ENCODE measurements at regions of chr16 and their contacts with region 1.

Region 1: DNA sequence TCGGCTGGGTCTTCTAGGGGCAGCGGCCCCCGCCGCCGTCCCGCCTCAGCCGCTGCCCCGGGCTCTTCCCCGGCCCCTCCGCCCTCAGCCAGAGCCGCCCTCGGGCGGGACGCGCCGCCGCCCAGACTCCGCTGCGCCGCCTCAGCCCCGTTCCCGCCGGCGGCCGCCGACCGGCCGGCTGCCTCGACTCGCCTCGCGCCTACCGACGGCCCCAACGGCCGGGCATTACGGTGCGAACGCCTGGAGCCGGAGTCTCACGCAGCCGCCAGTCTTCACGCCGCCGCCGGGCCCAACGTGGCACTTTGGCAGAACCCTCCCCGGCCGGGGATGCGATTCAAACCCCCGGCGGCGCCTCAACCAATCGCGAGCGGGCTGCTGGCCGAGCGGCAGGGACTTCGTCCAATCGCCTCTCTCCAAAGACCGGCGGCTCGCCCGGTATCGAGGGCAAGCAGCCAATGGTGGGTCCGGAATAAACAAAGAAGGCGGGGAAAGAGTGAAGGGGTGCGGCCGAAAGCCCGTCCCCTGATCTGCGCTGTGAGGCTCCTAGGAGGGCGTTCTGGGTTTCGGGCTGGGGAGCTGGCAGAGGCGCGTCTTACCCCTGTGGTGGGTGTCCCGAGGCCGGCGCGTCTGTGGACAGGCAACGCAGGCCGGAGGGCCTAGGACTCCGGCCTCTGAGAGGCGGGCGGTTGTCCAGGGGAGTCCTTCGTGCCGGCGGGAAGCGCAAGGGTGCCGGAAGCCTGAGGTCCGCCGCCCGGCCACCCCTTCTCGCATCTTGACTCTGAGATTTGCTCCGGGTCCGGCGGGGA is at the start of gene CDR2:
- DNase-seq: peak; percentile 98 to 99 (median 98)
- H3K4me3 ChIP-seq: peak within 1 kb of the TSS; percentile 86 to 87
- H3K4me3 Mint-ChIP-seq: peak within 1 kb of the TSS; percentile 94 to 99 (median 98)
- H3K27ac ChIP-seq: peak within 1 kb of the TSS; percentile 78
- H3K27ac Mint-ChIP-seq: peak within 1 kb of the TSS; percentile 91 to 97 (median 94)
- H3K4me1 ChIP-seq: peaks cover 41% of the 10 kb centered on the region
- H3K4me1 Mint-ChIP-seq: peaks cover 25 to 56% (median 39%) of the 10 kb centered on the region in 4 donors
- H3K27me3 ChIP-seq: no peaks in the 10 kb centered on the region
- H3K27me3 Mint-ChIP-seq: no peaks in the 10 kb centered on the region
- total RNA-seq, gene CDR2: 94.2 to 99.3 TPM

Region 2: DNA sequence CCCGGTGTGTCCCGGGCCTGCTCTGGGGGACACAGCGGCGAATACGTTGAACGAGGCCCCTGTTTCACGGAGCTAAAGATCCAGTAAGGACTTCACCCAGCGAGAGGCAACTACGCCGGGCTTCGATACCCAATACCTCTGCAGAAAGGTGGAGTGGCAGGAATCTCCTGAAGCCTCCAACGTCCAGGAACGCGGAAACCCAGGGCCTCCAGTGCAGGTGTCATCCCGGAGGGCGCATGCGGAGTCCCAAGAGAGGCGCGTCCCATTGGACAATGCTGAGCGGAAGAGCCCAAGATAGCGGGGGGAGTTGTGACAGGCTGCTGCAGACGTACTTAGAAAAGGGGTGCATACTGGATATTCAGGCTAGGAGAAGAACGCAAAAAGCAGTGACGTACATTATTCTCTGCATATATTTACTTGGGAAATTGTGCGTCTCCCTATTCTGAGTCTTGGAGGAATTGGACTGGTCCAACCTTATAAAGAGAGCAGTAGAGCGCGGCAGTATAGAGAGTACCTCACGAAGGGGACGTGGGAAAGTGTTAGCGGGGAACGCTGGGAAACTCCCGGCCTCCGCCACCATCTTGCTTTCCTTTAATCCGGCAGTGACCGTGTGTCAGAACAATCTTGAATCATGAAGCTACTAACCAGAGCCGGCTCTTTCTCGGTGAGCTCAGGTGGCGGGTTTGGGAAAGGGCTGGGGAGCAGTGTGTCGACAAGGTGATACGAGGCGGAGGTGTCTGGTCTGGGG is 421.5 kb before region 1 on chr16 and contains the start of gene UQCRC2:
- CTCF ChIA-PET with region 1: no interaction called
- POLR2A ChIA-PET with region 1: interaction called, 3 read pairs
- intact Hi-C with region 1: loop called (anchors 5 kb)
- DNase-seq: peak; percentile 90 to 94 (median 92)
- H3K4me3 ChIP-seq: peak within 1 kb of the TSS; percentile 98
- H3K4me3 Mint-ChIP-seq: peak within 1 kb of the TSS; percentile 96 to 100 (median 98)
- H3K27ac ChIP-seq: peak within 1 kb of the TSS; percentile 98
- H3K27ac Mint-ChIP-seq: peak within 1 kb of the TSS; percentile 95 to 100 (median 99)
- H3K4me1 ChIP-seq: peaks cover 53% of the 10 kb centered on the region
- H3K4me1 Mint-ChIP-seq: peaks cover 36 to 82% (median 59%) of the 10 kb centered on the region in 4 donors
- H3K27me3 ChIP-seq: no peaks in the 10 kb centered on the region
- H3K27me3 Mint-ChIP-seq: no peaks in the 10 kb centered on the region
- total RNA-seq, gene UQCRC2: 170 to 177 TPM

Region 3: DNA sequence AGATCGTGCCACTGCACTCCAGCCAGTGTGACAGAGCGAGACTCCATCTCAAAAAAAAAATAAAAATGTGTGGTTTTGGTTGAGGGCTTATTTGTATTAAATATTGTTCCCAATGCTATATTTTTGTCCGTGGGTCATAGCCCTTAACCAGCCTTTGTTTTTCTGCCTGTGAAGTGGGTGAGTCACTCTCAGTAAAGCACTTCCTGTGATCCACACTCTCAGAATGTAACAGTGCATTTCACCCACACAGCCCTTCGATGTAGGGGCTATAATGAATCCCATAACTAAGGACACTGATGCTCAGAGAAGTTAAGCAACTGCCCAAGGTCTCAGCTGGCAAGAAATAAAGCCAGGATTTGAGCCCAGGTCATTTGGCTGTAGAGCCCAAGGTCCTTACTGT is 112.1 kb before region 1 on chr16:
- CTCF ChIA-PET with region 1: no interaction called
- POLR2A ChIA-PET with region 1: no interaction called
- intact Hi-C with region 1: no loop called
- DNase-seq: no peak
- H3K4me3 ChIP-seq: no peak overlapping the region
- H3K4me3 Mint-ChIP-seq: no peak overlapping the region
- H3K27ac ChIP-seq: no peak overlapping the region
- H3K27ac Mint-ChIP-seq: peak overlapping the region in 4 of 7 donors; percentile 23 to 79 (median 44)
- H3K4me1 ChIP-seq: peaks cover 25% of the 10 kb centered on the region
- H3K4me1 Mint-ChIP-seq: peaks cover 11 to 37% (median 18%) of the 10 kb centered on the region in 4 donors
- H3K27me3 ChIP-seq: no peaks in the 10 kb centered on the region
- H3K27me3 Mint-ChIP-seq: no peaks in the 10 kb centered on the region

Region 4: GRCh38 chr16:22321339-22322001 is 53.0 kb before region 1 on chr16:
- CTCF ChIA-PET with region 1: interaction called, 9 read pairs
- POLR2A ChIA-PET with region 1: interaction called, 4 read pairs
- intact Hi-C with region 1: loop called (anchors 2 kb)
- DNase-seq: peak; percentile 73 to 78 (median 74)
- H3K4me3 ChIP-seq: no peak overlapping the region
- H3K4me3 Mint-ChIP-seq: peak overlapping the region in 3 of 8 donors; percentile 22 to 62 (median 26)
- H3K27ac ChIP-seq: no peak overlapping the region
- H3K27ac Mint-ChIP-seq: peak overlapping the region in 6 of 7 donors; percentile 58 to 92 (median 74)
- H3K4me1 ChIP-seq: peaks cover 5% of the 10 kb centered on the region
- H3K4me1 Mint-ChIP-seq: peaks cover 4 to 10% (median 6%) of the 10 kb centered on the region in 4 donors
- H3K27me3 ChIP-seq: no peaks in the 10 kb centered on the region
- H3K27me3 Mint-ChIP-seq: no peaks in the 10 kb centered on the region

Region 5: GRCh38 chr16:22333457-22333994 is 41.0 kb before region 1 on chr16:
- CTCF ChIA-PET with region 1: interaction called, 4 read pairs
- POLR2A ChIA-PET with region 1: interaction called, 15 read pairs
- intact Hi-C with region 1: loop called (anchors 5 kb)
- DNase-seq: no peak
- H3K4me3 ChIP-seq: no peak overlapping the region
- H3K4me3 Mint-ChIP-seq: no peak overlapping the region
- H3K27ac ChIP-seq: no peak overlapping the region
- H3K27ac Mint-ChIP-seq: peak overlapping the region in 3 of 7 donors; percentile 41 to 74 (median 57)
- H3K4me1 ChIP-seq: no peaks in the 10 kb centered on the region
- H3K4me1 Mint-ChIP-seq: peaks cover 14 to 28% (median 19%) of the 10 kb centered on the region in 4 donors
- H3K27me3 ChIP-seq: no peaks in the 10 kb centered on the region
- H3K27me3 Mint-ChIP-seq: no peaks in the 10 kb centered on the region

Region 6: DNA sequence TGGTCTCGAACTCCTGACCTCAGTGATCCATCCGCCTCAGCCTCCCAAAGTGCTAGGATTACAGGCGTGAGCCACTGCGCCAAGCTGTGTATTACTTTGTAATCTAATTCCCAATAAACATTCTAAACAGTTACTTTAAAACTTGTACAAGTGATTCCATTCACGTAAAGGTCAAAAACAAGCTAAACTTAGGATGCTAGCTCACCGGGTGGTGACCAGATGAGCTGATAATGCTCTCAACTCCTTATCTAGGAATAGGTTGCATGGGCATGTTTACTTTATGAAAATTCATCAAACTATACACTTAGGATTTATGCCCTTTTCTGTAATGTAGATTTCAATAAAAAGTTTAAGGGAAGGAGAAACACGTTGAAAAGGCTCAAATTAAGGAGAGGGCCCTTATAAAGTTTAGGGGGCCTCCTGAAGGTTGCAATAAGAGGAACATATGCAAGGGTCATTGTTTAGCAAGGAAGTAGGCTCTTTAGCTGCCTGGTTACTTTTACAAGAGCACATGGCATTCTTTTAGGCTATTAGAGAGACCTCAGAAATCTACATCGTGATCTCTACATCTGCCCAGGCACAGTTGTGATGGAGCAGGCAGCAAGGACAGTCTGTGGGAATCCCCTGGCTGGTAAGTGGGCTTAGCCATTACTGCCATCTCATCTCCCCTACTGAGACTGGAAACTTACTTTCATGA is 13.4 kb before region 1 on chr16:
- CTCF ChIA-PET with region 1: interaction called, 16 read pairs
- POLR2A ChIA-PET with region 1: interaction called, 449 read pairs
- intact Hi-C with region 1: loop called (anchors 1 kb)
- DNase-seq: no peak
- H3K4me3 ChIP-seq: no peak overlapping the region
- H3K4me3 Mint-ChIP-seq: peak overlapping the region in 6 of 8 donors; percentile 13 to 54 (median 32)
- H3K27ac ChIP-seq: no peak overlapping the region
- H3K27ac Mint-ChIP-seq: peak overlapping the region; percentile 30 to 91 (median 84)
- H3K4me1 ChIP-seq: peaks cover 85% of the 10 kb centered on the region
- H3K4me1 Mint-ChIP-seq: peaks cover 46 to 90% (median 68%) of the 10 kb centered on the region in 4 donors
- H3K27me3 ChIP-seq: no peaks in the 10 kb centered on the region
- H3K27me3 Mint-ChIP-seq: no peaks in the 10 kb centered on the region

Measured in CD4-positive, alpha-beta memory T cell (primary cell).